ENCODE measurements at regions of chr3 and their contacts with region 1.

Region 1: DNA sequence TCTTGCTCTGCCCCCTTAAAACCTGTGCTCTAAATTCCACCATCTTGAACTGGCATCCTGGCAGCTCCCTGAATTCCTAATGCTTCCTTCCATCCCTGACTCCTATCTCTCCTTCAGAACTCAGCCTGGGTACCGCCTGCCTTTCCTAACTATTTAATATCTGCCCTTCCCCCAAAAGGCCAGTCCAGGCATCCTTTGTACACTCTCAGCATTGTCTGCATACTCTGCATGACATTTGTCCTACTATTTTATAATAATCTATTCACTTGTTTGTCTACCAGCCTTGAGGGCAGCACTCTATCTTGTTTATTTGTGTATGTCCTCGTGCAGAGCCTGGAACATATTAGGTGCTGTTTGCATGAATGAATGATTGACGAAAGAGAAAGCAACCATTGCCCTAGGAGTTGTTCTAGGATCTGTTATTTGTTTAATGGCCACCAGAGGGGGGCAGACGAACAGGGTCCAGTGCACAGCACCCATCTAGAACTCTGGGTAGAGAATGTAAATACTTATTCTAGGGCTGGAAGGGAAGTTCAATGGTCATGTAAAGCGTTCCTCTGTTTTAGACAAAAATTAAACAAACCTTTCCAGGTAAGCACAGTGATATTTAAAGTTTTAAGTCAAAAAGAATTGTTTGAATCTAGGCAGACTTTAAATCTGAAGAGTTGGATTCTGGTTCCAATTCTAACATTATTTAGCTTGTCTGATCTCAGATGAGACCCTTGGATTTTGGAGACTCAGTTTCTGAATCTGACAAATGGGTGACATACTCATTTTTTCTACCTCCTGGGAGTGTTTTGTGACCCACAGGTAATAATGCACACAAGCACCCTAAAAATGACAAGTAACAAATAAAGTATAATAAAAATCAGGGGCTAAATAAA is 125.8 kb upstream of the GALNT15 start:
- DNase-seq: peak; percentile 83
- ATAC-seq: peak; percentile 99
- H3K4me3 ChIP-seq: peak overlapping the region; percentile 28
- H3K27ac ChIP-seq: no peak overlapping the region
- H3K4me1 ChIP-seq: no peaks in the 10 kb centered on the region
- H3K27me3 ChIP-seq: no peaks in the 10 kb centered on the region
- CTCF ChIP-seq: peak; percentile 95

Region 2: DNA sequence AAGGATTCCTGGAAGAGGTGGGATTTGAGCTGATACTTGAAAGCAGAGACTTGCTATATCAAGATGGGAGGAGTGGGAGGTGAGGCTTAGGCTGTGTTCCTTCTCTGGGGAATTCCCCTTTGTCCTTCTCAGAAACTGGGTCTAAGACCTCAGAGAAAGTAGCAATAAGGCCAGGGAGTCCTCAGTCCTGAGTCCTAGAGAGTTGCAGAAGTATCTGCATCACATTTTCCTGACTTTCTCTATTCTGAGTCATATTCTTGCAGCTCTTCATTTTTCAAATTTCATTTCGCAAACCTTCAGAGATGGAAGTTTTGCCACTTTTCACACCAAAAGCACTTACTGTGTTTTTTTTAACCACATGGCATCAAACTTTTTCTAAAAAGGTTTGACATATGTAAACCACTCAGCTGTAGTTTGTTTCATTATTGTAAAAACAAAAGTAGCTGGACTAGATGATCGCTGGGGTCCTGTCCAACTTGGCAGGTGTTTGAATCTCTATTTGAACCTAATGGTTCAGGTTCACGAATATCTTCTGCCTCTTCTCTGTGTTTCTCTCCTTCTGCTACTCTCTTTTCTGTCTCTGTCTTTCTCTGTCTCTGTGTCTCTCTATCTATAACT is 548.5 kb before region 1 on chr3:
- CTCF ChIA-PET with region 1: no interaction called
- POLR2A ChIA-PET with region 1: no interaction called
- intact Hi-C with region 1: no loop called
- DNase-seq: no peak
- ATAC-seq: no peak
- H3K4me3 ChIP-seq: no peak overlapping the region
- H3K27ac ChIP-seq: no peak overlapping the region
- H3K4me1 ChIP-seq: no peaks in the 10 kb centered on the region
- H3K27me3 ChIP-seq: 0 out of 2 replicates have a peak, but pooled peaks cover 3% of the 10 kb centered on the region
- CTCF ChIP-seq: no peak

Region 3: GRCh38 chr3:15693355-15693754 is 355.3 kb before region 1 on chr3:
- CTCF ChIA-PET with region 1: no interaction called
- POLR2A ChIA-PET with region 1: no interaction called
- intact Hi-C with region 1: loop called (anchors 10 kb)
- DNase-seq: peak; percentile 46
- ATAC-seq: peak; percentile 74
- H3K4me3 ChIP-seq: no peak overlapping the region
- H3K27ac ChIP-seq: no peak overlapping the region
- H3K4me1 ChIP-seq: no peaks in the 10 kb centered on the region
- H3K27me3 ChIP-seq: no peaks in the 10 kb centered on the region
- CTCF ChIP-seq: peak; percentile 48

Region 4: DNA sequence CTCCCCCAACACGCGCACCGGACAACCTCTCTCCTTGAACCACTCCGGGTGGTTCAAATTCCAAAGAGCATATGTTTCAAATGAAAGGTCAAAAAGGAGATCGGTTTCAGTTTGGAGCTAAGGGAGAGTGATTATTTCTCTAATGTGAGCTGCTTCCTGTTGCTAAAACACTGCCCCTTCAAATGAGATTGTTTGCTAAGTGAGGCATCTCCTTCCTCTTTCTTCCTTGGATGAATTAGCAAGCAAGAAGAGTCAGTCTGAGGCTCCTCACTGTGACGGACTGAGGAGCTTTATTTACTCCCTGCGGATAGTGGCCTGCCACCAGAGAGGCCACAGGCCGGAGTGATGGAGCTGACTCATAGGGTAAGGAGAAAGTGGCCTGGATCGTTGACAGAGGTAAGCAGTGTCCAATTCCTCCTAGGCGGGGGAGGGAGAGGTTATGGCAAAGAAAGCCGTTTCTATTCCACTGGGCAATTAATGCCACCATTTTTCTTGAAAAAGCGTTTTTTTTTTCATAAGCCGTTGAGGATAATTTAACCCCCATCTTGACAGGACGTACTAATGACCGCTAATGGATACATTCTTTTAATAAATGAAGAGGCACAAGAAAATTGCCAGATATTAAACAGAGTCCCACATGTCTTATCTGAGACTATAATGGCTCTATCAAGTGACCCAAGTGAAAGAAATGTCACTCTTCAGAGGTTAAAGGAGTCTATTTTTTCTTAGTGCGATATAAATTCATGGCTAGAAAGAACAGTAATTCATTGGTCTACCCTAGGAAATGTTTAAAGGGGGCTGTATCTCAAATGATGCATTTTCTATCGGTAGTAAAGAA is 83.9 kb before region 1 on chr3:
- CTCF ChIA-PET with region 1: no interaction called
- POLR2A ChIA-PET with region 1: no interaction called
- intact Hi-C with region 1: loop called (anchors 10 kb)
- DNase-seq: peak; percentile 75
- ATAC-seq: peak; percentile 99
- H3K4me3 ChIP-seq: peak overlapping the region; percentile 39; the same call in 1 of the 2 replicates
- H3K27ac ChIP-seq: peak overlapping the region; percentile 44
- H3K4me1 ChIP-seq: peaks cover 18% of the 10 kb centered on the region
- H3K27me3 ChIP-seq: no peaks in the 10 kb centered on the region
- CTCF ChIP-seq: no peak

Region 5: GRCh38 chr3:15998907-15999306 is 49.8 kb before region 1 on chr3:
- CTCF ChIA-PET with region 1: no interaction called
- POLR2A ChIA-PET with region 1: no interaction called
- intact Hi-C with region 1: no loop called
- DNase-seq: no peak
- ATAC-seq: no peak
- H3K4me3 ChIP-seq: no peak overlapping the region
- H3K27ac ChIP-seq: no peak overlapping the region
- H3K4me1 ChIP-seq: no peaks in the 10 kb centered on the region
- H3K27me3 ChIP-seq: no peaks in the 10 kb centered on the region
- CTCF ChIP-seq: no peak

Region 6: GRCh38 chr3:16102905-16103364 is 54.3 kb after region 1 on chr3:
- CTCF ChIA-PET with region 1: interaction called, 4 read pairs
- POLR2A ChIA-PET with region 1: no interaction called
- intact Hi-C with region 1: loop called (anchors 1 kb)
- DNase-seq: peak; percentile 68
- ATAC-seq: peak; percentile 63
- H3K4me3 ChIP-seq: no peak overlapping the region
- H3K27ac ChIP-seq: peak overlapping the region; percentile 97
- H3K4me1 ChIP-seq: peaks cover 22% of the 10 kb centered on the region
- H3K27me3 ChIP-seq: no peaks in the 10 kb centered on the region
- CTCF ChIP-seq: no peak; the same call in 1 of the 2 replicates

Region 7: GRCh38 chr3:16177962-16178627 is 129.4 kb after region 1 on chr3:
- CTCF ChIA-PET with region 1: interaction called, 4 read pairs
- POLR2A ChIA-PET with region 1: no interaction called
- intact Hi-C with region 1: loop called (anchors 1 kb)
- DNase-seq: peak; percentile 84
- ATAC-seq: peak; percentile 94
- H3K4me3 ChIP-seq: no peak overlapping the region
- H3K27ac ChIP-seq: no peak overlapping the region
- H3K4me1 ChIP-seq: peaks cover 12% of the 10 kb centered on the region; the same call in 1 of the 2 replicates
- H3K27me3 ChIP-seq: no peaks in the 10 kb centered on the region
- CTCF ChIP-seq: peak; percentile 96

Measured in PC-3 (cell line).